Activated T-helper 1 cell treated with anti-CD3 and anti-CD28 coated beads, Interleukin-12 subunit alpha, Interleukin-12 subunit beta, Interleukin-2, Interleukin-4 antibody, amounts not matched to agents 30 ng/mL and 10 ng/mL and 1 ng/mL, durations not matched to agents 14 hours and 24 hours and 36 hours (primary cell): ENCODE measurements at regions of chr11 and their contacts with region 1.

Region 1: DNA sequence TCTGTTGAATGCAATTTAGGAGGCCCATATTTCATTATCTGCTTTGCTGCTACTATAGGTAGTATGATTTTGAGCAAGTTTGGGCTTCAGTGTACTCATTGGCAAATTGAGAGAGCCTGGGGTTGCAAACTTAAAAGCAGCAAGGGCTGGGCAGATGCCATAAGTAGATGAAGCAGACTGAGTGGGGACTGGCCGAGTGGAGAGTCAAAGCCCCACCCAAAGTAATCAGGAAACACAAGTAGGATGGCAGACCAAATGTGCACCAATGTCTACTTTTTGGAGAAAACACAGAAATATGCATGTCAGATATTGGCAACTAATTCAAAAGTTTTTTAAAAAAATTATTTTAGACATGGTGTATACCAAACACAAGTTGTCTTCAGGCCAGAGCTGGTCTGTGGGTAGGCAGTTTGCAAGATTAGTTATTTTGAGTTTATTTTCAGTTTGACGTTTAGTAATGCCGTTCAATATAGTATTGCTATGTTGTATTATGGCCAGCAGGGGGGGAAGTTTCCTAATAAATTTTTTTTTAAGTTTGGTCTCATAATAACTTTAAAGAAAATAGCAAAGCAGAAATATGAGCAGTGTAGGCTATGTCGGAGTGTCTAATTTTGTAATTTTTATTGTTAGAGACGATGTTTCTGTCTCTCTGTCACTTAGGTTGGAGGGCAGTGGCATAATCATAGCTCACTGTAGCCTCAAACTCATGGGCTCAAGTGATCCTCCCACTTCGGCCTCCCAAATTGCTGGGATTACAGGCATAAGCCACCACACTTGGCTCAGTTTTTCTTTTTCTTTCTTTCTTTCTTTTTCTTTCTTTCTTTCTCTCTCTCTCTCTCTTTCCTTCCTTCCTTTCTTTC is 105.1 kb downstream of the HIPK3 start:
- DNase-seq: no peak
- H3K4me3 Mint-ChIP-seq: no peak overlapping the region
- H3K27ac Mint-ChIP-seq: no peak overlapping the region
- H3K4me1 Mint-ChIP-seq: no peaks in the 10 kb centered on the region
- H3K27me3 Mint-ChIP-seq: peaks cover 19% of the 10 kb centered on the region

Region 2: DNA sequence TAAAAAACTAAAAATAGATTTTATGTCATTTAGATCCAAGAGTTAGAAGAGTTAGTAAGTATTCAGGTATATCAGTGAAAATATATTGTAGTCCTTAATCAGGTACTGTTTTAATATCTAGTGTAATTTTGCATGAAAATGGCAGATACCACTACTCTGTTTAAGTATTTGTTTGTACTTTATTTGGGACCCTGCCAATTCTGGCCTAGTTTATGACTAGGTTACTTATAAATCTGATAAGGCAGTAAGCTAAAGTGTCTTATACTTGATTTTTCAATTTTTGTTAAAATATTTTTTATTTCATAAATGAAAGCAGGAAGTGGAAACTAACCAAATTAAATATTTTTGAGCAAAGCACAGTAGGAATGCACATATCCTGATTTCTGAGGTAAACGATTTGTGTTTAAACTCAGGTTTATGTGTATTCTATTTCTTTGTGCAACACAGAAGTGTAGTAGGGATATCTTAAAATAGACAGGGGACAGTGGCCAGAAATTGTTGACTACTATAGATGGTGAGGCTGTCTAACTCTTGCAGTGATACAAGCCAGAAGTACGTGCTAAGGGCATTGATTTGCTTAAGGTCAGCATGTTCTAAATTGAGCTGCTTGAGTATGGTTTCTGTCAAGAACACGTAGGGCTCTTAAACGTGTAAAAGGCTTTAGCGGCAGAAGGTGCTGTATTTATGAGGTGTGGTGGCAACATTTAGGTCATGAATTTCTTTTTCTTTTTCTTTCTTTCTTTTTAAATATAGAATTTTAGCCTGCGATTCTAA is 71.1 kb before region 1 on chr11:
- intact Hi-C with region 1: no loop called
- DNase-seq: no peak
- H3K4me3 Mint-ChIP-seq: no peak overlapping the region
- H3K27ac Mint-ChIP-seq: no peak overlapping the region
- H3K4me1 Mint-ChIP-seq: peaks cover 5% of the 10 kb centered on the region
- H3K27me3 Mint-ChIP-seq: no peaks in the 10 kb centered on the region

Region 3: GRCh38 chr11:33542921-33543320 is 180.6 kb after region 1 on chr11:
- intact Hi-C with region 1: loop called (anchors 10 kb)
- DNase-seq: no peak
- H3K4me3 Mint-ChIP-seq: no peak overlapping the region
- H3K27ac Mint-ChIP-seq: no peak overlapping the region
- H3K4me1 Mint-ChIP-seq: peaks cover 7% of the 10 kb centered on the region
- H3K27me3 Mint-ChIP-seq: peaks cover 23% of the 10 kb centered on the region

Region 4: DNA sequence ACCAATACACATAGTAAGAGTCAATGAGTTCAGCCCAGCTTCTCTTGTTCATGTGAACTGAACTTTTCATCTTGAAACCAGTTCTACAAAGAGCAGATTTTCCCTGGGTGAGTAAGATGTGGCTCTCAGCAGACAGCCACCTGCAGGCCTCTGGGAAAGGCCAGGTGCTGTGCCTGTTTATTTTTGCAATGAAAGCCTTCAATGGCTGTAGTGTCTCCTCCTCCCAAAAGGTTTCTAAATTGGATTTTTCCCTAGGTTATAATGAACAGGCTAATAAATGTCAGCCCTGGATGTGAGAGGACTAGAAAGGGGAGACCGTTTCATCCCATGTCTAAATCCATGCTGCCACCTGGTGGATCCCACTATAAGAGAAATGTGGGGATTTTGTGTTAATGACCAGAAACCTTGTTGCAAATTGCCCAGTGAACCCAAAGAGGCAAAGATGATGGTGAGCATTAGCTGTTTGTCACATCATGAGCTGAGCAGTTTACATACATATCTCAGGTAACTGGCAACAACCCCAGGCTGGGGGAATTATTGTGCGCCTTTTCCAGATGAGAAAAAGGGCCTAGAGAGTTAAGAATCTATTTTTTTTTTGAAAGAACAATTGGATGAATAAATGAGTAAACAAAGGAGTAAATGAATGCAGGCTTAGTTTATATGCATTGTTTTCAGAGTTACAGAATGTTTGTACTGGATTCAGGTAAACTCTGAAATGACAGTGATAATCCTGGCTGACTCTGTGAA is 325.6 kb after region 1 on chr11:
- intact Hi-C with region 1: loop called (anchors 1 kb)
- DNase-seq: no peak
- H3K4me3 Mint-ChIP-seq: no peak overlapping the region
- H3K27ac Mint-ChIP-seq: no peak overlapping the region
- H3K4me1 Mint-ChIP-seq: no peaks in the 10 kb centered on the region
- H3K27me3 Mint-ChIP-seq: peaks cover 9% of the 10 kb centered on the region

Region 5: DNA sequence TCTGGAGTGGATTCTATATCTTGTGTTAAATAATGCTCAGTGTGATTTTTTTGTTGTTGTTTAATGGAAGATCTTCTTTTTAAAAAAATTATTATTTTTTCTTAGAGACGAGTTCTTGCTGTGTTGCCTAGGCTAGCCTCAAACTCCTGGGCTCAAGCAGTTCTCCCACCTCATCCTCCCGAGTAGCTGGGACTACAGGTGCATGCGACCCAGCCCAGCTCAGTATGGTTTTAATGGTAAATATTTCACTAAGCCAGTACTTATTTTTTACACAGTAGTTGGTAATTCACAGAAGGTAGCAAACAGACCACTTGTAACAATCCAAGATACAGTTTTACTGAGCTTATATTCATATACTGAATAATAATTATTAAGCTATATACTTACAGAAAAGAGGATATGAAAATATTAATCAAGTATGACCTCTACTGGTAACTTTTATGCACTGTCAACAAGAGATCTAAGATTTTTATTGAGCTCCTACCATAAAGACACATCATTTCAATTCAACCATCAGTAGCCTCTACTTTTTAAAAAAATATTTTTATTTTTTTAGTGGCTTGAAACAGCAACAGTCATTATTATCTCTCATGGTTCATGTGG is 380.1 kb after region 1 on chr11:
- intact Hi-C with region 1: loop called (anchors 1 kb)
- DNase-seq: no peak
- H3K4me3 Mint-ChIP-seq: no peak overlapping the region
- H3K27ac Mint-ChIP-seq: no peak overlapping the region
- H3K4me1 Mint-ChIP-seq: no peaks in the 10 kb centered on the region
- H3K27me3 Mint-ChIP-seq: no peaks in the 10 kb centered on the region